ENCODE measurements at regions of chr11 and their contacts with region 1.

Region 1: GRCh38 chr11:129922674-129923073 is 27.3 kb upstream of the NFRKB start:
- DNase-seq: no peak
- H3K4me3 ChIP-seq: no peak overlapping the region
- H3K27ac ChIP-seq: no peak overlapping the region
- H3K4me1 ChIP-seq: no peaks in the 10 kb centered on the region
- H3K27me3 ChIP-seq: no peaks in the 10 kb centered on the region
- CTCF ChIP-seq: no peak
- EP300 ChIP-seq: no peak
- POLR2A ChIP-seq: no peak

Region 2: DNA sequence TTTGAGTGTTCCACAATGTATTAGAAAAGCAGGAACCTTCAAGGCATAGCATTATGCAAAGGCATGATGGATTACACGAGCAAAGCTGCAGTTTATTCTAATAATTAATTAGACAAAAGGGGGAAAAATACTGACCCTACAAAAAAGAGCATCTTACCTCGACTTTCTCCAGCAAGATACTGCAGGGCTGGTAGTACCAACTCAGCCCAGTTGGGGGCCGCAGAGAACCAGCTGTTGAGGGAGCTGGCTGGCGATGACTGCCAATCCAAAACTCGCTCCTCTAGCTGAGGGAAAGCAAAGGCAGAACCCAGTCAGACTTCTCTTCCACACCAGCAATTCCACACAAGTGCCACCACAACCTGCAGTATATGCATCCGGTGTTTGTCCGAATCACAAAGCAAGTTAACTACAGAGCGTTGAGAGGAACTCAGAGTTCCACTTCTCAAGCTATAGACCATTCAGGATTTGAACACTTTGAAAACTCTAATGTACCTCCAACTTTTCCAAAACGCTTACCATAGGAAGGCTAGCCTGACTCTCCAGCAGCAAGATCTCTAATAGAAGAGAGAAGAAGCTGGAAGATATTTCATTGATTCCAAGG is 41.0 kb before region 1 on chr11:
- intact Hi-C with region 1: no loop called
- DNase-seq: peak; percentile 53 to 63
- H3K4me3 ChIP-seq: no peak overlapping the region
- H3K27ac ChIP-seq: no peak overlapping the region
- H3K4me1 ChIP-seq: no peaks in the 10 kb centered on the region
- H3K27me3 ChIP-seq: no peaks in the 10 kb centered on the region
- CTCF ChIP-seq: peak in 5 of 7 experiments; percentile 10 to 45 (median 41)
- EP300 ChIP-seq: no peak
- POLR2A ChIP-seq: no peak

Region 3: DNA sequence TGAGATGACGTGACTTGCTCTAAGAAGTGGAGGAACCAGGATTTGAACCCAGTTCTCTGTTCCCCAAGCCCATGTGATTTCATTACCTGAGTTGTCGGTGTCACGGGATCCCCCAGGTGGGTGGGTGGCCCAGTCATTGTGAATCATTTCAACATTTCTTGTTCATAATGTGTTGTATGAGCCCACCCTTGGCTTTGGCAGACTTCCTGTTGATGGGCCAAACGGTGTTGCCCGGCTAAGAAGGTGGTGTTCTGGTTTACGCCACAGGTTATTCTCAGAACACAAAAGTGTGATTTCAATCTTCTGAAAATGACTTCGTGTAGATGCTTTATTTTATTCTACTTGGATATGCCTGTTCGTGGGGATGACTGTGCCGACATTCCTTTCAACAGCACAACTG is 215.3 kb after region 1 on chr11:
- intact Hi-C with region 1: loop called (anchors 2 kb)
- DNase-seq: no peak
- H3K4me3 ChIP-seq: no peak overlapping the region
- H3K27ac ChIP-seq: no peak overlapping the region
- H3K4me1 ChIP-seq: peaks cover 0 to 15% (median 4%) of the 10 kb centered on the region in 4 donors
- H3K27me3 ChIP-seq: no peaks in the 10 kb centered on the region
- CTCF ChIP-seq: no peak
- EP300 ChIP-seq: no peak
- POLR2A ChIP-seq: no peak

Measured in stomach (tissue), 19 donors.